ENCODE measurements at regions of chr11 and their contacts with region 1.

Region 1: DNA sequence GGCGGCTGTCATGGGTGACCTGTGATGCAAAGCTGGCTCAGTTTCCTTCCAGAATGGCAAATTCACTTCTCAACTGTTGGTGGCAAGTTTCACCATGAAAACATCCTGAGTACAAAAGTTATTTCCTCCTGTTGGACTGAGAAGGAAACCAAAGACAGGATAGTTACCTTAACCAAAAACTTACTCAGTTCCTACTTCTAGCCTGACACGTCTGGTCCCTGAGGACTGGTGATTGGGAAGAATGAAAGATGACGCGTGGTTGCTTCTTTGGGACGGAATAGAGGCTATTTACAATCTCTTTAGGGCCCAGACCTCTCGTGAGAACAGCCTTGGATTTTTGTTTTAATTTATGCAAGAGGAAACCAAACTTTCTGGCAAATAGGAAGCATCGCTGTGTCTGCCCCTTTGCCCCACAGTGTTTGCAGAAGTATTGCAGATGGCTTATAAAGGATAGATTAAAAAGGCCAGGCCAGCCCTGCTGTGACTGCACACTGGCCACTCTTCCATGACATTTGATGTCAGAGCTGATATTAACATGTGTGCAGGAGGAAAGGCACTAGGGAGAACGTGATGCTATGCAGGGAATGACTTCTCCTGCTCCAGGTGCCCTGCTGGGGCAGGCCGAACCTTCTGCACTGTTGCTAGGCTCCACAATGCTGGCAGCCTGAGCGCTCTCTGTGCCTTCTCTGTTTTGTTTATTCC is 7.6 kb downstream of the VPS26B start:
- DNase-seq: no peak
- H3K4me3 Mint-ChIP-seq: no peak overlapping the region
- H3K27ac Mint-ChIP-seq: peak overlapping the region; percentile 28
- H3K4me1 Mint-ChIP-seq: peaks cover 55% of the 10 kb centered on the region
- H3K27me3 Mint-ChIP-seq: no peaks in the 10 kb centered on the region

Region 2: DNA sequence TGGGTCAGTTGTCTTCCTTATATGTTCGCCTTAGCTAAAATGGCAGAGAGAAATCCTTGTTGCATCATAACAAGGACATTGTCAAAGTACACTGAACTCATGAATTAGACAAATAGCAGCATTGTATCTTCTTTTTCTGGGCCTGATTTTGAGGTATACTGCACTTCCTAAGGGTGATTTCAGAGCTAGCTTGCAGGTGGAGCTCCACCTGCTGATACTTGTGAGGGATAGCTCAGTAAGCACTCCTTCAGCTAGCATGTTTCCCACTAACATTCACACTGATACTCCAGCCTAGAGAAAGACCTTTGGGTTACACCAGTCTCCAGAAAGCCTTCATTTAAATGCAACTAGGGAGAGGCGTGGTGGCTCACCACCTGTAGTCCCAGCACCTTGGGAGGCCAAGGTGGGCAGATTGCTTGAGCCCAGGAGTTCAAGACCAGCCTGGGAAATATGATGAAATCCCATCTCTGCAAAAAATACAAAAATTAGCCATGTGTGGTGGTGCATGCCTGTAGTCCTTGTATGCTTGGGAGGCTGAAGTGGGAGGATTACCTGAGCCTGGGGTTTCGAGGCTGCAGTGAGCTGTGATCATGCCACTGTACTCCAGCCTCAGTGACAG is 133.4 kb before region 1 on chr11:
- CTCF ChIA-PET with region 1: no interaction called
- POLR2A ChIA-PET with region 1: no interaction called
- DNase-seq: peak; percentile 13
- H3K4me3 Mint-ChIP-seq: no peak overlapping the region
- H3K27ac Mint-ChIP-seq: no peak overlapping the region
- H3K4me1 Mint-ChIP-seq: peaks cover 1% of the 10 kb centered on the region
- H3K27me3 Mint-ChIP-seq: peaks cover 3% of the 10 kb centered on the region

Region 3: GRCh38 chr11:134244655-134245054 is 12.5 kb after region 1 on chr11:
- CTCF ChIA-PET with region 1: interaction called, 16 read pairs
- POLR2A ChIA-PET with region 1: no interaction called
- DNase-seq: peak; percentile 40
- H3K4me3 Mint-ChIP-seq: no peak overlapping the region
- H3K27ac Mint-ChIP-seq: peak overlapping the region; percentile 47
- H3K4me1 Mint-ChIP-seq: peaks cover 8% of the 10 kb centered on the region
- H3K27me3 Mint-ChIP-seq: no peaks in the 10 kb centered on the region